ENCODE measurements at regions of chr6 and their contacts with region 1.

Region 1: GRCh38 chr6:144493035-144493910 is 208.1 kb downstream of the UTRN start:
- DNase-seq: peak; percentile 58
- ATAC-seq: no peak; the same call in 1 of the 2 replicates
- H3K4me3 ChIP-seq: no peak overlapping the region
- H3K27ac ChIP-seq: peak overlapping the region; percentile 47
- H3K4me1 ChIP-seq: peaks cover 11% of the 10 kb centered on the region
- H3K27me3 ChIP-seq: no peaks in the 10 kb centered on the region
- CTCF ChIP-seq: no peak

Region 2: GRCh38 chr6:144434308-144434990 is 58.8 kb before region 1 on chr6:
- CTCF ChIA-PET with region 1: no interaction called
- POLR2A ChIA-PET with region 1: no interaction called
- intact Hi-C with region 1: no loop called
- DNase-seq: peak; percentile 70
- ATAC-seq: peak; percentile 95
- H3K4me3 ChIP-seq: no peak overlapping the region
- H3K27ac ChIP-seq: no peak overlapping the region
- H3K4me1 ChIP-seq: peaks cover 22% of the 10 kb centered on the region
- H3K27me3 ChIP-seq: no peaks in the 10 kb centered on the region
- CTCF ChIP-seq: no peak

Region 3: DNA sequence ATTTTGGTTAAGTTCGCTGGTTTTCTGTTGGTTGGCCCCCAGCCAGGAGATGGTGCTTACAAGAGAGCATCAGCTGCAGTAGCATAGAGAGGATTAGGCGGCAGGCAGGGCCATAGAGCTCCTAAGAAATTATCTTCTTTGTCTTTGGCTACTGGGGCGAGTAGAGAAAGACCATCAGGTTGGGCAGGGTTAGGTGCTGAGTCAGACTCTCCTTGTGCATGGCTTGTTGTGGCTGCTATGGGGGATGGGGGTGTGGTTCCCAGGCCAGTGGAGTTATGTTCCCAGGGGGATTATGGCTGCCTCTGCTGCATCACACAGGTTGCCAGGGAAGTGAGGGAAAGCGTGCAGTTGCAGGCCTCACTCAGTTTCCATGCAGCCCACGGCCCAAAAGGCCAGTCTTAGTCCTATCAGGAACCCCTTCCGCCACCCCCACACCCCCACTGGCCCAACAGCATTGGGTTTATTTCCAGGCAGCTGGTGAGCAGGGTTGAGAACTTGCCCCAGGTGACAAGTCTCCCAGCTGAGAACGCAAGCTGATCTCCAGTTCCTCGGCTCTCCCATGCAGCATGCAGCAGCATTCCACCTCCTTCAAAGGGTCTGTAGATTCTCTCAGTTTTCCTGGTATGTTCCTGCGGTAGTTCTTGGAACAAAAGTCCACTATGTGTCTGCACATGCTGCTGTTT is 35.6 kb after region 1 on chr6:
- CTCF ChIA-PET with region 1: no interaction called
- POLR2A ChIA-PET with region 1: no interaction called
- intact Hi-C with region 1: no loop called
- DNase-seq: peak; percentile 15
- ATAC-seq: no peak
- H3K4me3 ChIP-seq: no peak overlapping the region
- H3K27ac ChIP-seq: no peak overlapping the region
- H3K4me1 ChIP-seq: peaks cover 3% of the 10 kb centered on the region
- H3K27me3 ChIP-seq: no peaks in the 10 kb centered on the region
- CTCF ChIP-seq: no peak

Region 4: DNA sequence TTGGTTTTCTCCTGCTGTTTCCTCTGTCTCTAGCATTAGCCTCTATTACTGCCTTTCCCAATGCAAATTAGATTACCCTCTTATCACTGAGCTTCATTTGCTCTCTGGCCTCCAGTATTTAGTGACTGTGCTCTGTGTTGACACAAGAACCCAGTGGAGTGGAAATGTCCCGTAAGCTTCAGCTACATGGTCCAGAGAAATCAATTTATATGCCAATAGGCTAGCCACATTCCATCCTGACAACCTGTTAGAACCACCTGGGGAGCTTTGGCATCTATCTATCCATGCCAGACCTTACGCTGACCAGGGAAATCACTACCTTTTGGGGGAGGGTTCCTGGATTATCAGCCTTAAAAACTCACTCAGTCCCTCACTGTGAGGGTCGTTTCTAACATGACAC is 251.4 kb after region 1 on chr6:
- CTCF ChIA-PET with region 1: no interaction called
- POLR2A ChIA-PET with region 1: interaction called, 10 read pairs
- intact Hi-C with region 1: no loop called
- DNase-seq: no peak
- ATAC-seq: no peak
- H3K4me3 ChIP-seq: no peak overlapping the region
- H3K27ac ChIP-seq: no peak overlapping the region
- H3K4me1 ChIP-seq: no peaks in the 10 kb centered on the region
- H3K27me3 ChIP-seq: no peaks in the 10 kb centered on the region
- CTCF ChIP-seq: no peak

Measured in PC-3 (cell line).